Naive thymus-derived CD4-positive, alpha-beta T cell (primary cell): ENCODE measurements at regions of chr17 and their contacts with region 1.

Region 1: GRCh38 chr17:76353599-76354316 is at the start of gene PRPSAP1:
- DNase-seq: peak; percentile 76 to 89 (median 82)
- ATAC-seq: peak; percentile 98
- H3K4me3 ChIP-seq: peak within 1 kb of the TSS; percentile 97
- H3K4me3 Mint-ChIP-seq: peak within 1 kb of the TSS; percentile 89 to 99 (median 94)
- H3K27ac ChIP-seq: peak within 1 kb of the TSS; percentile 81
- H3K27ac Mint-ChIP-seq: peak within 1 kb of the TSS; percentile 91 to 100 (median 96)
- H3K4me1 ChIP-seq: no peaks in the 10 kb centered on the region
- H3K4me1 Mint-ChIP-seq: peaks cover 13 to 35% (median 19%) of the 10 kb centered on the region in 7 donors
- H3K27me3 ChIP-seq: no peaks in the 10 kb centered on the region
- H3K27me3 Mint-ChIP-seq: no peaks in the 10 kb centered on the region
- total RNA-seq, gene PRPSAP1: 19.6 to 55.9 (median 45.8) TPM

Region 2: DNA sequence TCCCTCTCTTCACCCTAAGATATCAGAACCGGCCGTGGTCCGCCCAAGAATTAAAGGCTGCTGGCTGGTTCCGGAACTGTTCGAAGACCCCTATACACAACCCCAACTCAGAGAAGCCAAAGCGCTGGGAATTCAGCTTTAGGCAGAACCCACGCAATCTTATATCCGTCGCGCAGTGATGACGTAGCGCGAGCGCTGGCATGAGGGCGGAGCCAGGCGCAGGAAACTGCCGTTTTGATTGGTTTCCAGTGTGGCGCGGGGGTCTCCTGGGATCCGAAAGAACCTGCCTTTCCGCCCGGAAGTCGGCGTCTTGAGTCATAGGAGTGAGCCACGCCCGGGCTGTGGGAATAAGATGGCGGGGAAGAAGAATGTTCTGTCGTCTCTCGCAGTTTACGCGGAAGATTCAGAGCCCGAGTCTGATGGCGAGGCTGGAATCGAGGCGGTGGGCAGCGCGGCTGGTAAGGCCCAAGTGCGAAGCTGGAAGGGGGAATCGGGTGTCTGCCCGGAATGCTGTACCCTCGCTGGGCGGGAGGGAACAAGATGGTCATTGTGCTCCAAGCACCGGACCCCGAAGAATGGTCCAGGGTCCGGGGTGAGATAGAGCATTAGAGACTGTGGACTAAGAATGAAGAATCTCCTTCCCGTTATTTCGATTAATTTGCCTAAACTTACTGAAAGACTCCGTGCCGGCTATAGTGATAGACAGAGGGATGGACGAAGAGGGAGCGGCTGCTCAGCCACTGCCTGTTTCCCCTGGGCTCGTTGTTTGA is 686.6 kb before region 1 on chr17 and contains the starts of genes RECQL5 and SAP30BP:
- CTCF ChIA-PET with region 1: no interaction called
- POLR2A ChIA-PET with region 1: no interaction called
- intact Hi-C with region 1: loop called in 1 of 2 experiments (anchors 5 kb)
- DNase-seq: peak; percentile 94 to 98 (median 96)
- ATAC-seq: peak; percentile 100
- H3K4me3 ChIP-seq: peak within 1 kb of the TSS; percentile 99
- H3K4me3 Mint-ChIP-seq: peak within 1 kb of the TSS in 6 of 10 donors; percentile 59 to 74 (median 64)
- H3K27ac ChIP-seq: peak within 1 kb of the TSS; percentile 96
- H3K27ac Mint-ChIP-seq: peak within 1 kb of the TSS in 5 of 9 donors; percentile 6 to 83 (median 60)
- H3K4me1 ChIP-seq: peaks cover 21 to 26% of the 10 kb centered on the region in 2 donors
- H3K4me1 Mint-ChIP-seq: peaks cover 11 to 34% (median 21%) of the 10 kb centered on the region in 7 donors
- H3K27me3 ChIP-seq: no peaks in the 10 kb centered on the region
- H3K27me3 Mint-ChIP-seq: no peaks in the 10 kb centered on the region
- total RNA-seq, gene RECQL5: 38.7 to 76.5 (median 49.2) TPM
- total RNA-seq, gene SAP30BP: 97.6 to 198 (median 116) TPM

Region 3: GRCh38 chr17:75940724-75941441 is 412.9 kb before region 1 on chr17 and contains the start of gene FBF1:
- CTCF ChIA-PET with region 1: no interaction called
- POLR2A ChIA-PET with region 1: no interaction called
- intact Hi-C with region 1: loop called in 1 of 2 experiments (anchors 5 kb)
- DNase-seq: peak; percentile 74 to 92 (median 82)
- ATAC-seq: peak; percentile 100
- H3K4me3 ChIP-seq: peak within 1 kb of the TSS; percentile 89
- H3K4me3 Mint-ChIP-seq: peak within 1 kb of the TSS; percentile 77 to 93 (median 90)
- H3K27ac ChIP-seq: peak within 1 kb of the TSS; percentile 86
- H3K27ac Mint-ChIP-seq: peak within 1 kb of the TSS; percentile 74 to 94 (median 89)
- H3K4me1 ChIP-seq: peaks cover 5 to 11% of the 10 kb centered on the region in 2 donors
- H3K4me1 Mint-ChIP-seq: peaks cover 9 to 19% (median 11%) of the 10 kb centered on the region in 7 donors
- H3K27me3 ChIP-seq: no peaks in the 10 kb centered on the region
- H3K27me3 Mint-ChIP-seq: no peaks in the 10 kb centered on the region
- total RNA-seq, gene FBF1: 19.9 to 48.1 (median 29.0) TPM

Region 4: DNA sequence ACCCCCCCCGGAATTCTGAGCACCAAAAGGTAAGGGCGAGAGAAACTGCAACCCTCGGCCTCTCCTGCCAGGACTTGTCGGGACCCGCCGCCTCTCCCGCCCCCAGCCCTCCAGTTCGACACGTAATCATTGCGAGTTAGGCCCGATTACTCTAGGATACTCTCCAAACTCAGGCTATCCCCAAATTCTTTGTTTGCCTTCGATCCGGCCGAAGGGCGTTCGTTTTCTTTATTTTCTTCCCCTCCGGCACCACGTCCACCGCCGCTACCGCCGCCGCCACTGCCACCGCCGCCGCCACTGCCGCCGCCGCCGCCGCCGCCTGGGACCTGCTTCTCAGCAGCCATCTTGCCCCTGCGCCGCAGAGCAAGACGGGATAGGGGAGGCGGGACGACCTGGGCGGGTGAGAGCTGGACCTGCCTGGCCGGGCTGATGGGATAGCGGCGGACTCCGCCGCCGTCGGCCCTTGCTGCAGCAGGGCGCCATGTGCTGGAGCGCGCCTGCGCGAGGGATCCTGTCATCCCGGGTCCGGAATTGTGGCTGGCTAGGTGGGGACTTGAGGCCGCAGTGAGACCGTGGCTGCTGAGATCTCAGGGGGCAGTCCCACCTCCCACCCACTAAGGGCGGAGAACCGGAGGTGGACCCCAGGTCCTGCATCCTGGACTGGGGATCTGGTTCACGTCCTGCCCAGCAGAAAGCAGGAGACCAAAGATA is 281.5 kb before region 1 on chr17 and contains the start of gene SRP68:
- CTCF ChIA-PET with region 1: no interaction called
- POLR2A ChIA-PET with region 1: no interaction called
- intact Hi-C with region 1: loop called in 1 of 2 experiments (anchors 1 kb)
- DNase-seq: peak; percentile 63 to 86 (median 74)
- ATAC-seq: peak; percentile 92
- H3K4me3 ChIP-seq: peak within 1 kb of the TSS; percentile 89
- H3K4me3 Mint-ChIP-seq: peak within 1 kb of the TSS; percentile 85 to 98 (median 97)
- H3K27ac ChIP-seq: peak within 1 kb of the TSS; percentile 93
- H3K27ac Mint-ChIP-seq: peak within 1 kb of the TSS; percentile 90 to 98 (median 95)
- H3K4me1 ChIP-seq: peaks cover 10 to 37% of the 10 kb centered on the region in 2 donors
- H3K4me1 Mint-ChIP-seq: peaks cover 21 to 62% (median 52%) of the 10 kb centered on the region in 7 donors
- H3K27me3 ChIP-seq: peaks cover 13 to 14% of the 10 kb centered on the region in 2 donors
- H3K27me3 Mint-ChIP-seq: peaks cover 17 to 37% (median 24%) of the 10 kb centered on the region in 5 donors
- total RNA-seq, gene SRP68: 70.8 to 105 (median 91.9) TPM

Region 5: GRCh38 chr17:76384222-76384986 is 30.6 kb after region 1 on chr17 and contains the start of gene SPHK1:
- CTCF ChIA-PET with region 1: no interaction called
- POLR2A ChIA-PET with region 1: interaction called, 8 read pairs
- intact Hi-C with region 1: loop called (anchors 1 kb)
- DNase-seq: peak in 7 of 9 donors; percentile 23 to 87 (median 42)
- ATAC-seq: peak; percentile 68
- H3K4me3 ChIP-seq: peak within 1 kb of the TSS; percentile 63
- H3K4me3 Mint-ChIP-seq: peak within 1 kb of the TSS; percentile 86 to 94 (median 92)
- H3K27ac ChIP-seq: no peak within 1 kb of the TSS
- H3K27ac Mint-ChIP-seq: peak within 1 kb of the TSS; percentile 18 to 88 (median 67)
- H3K4me1 ChIP-seq: peaks cover 0 to 15% of the 10 kb centered on the region in 2 donors
- H3K4me1 Mint-ChIP-seq: peaks cover 4 to 17% (median 11%) of the 10 kb centered on the region in 7 donors
- H3K27me3 ChIP-seq: no peaks in the 10 kb centered on the region
- H3K27me3 Mint-ChIP-seq: peaks cover 0 to 2% (median 0%) of the 10 kb centered on the region in 5 donors
- total RNA-seq, gene SPHK1: 0.43 to 14.1 (median 1.9) TPM

Region 6: GRCh38 chr17:76501018-76501826 is 147.5 kb after region 1 on chr17 and contains the start of gene RHBDF2:
- CTCF ChIA-PET with region 1: no interaction called
- POLR2A ChIA-PET with region 1: no interaction called
- intact Hi-C with region 1: loop called in 1 of 2 experiments (anchors 1 kb)
- DNase-seq: peak; percentile 90 to 100 (median 95)
- ATAC-seq: peak; percentile 99
- H3K4me3 ChIP-seq: peak within 1 kb of the TSS; percentile 62
- H3K4me3 Mint-ChIP-seq: peak within 1 kb of the TSS; percentile 82 to 91 (median 86)
- H3K27ac ChIP-seq: peak within 1 kb of the TSS; percentile 73
- H3K27ac Mint-ChIP-seq: peak within 1 kb of the TSS; percentile 95 to 99 (median 97)
- H3K4me1 ChIP-seq: peaks cover 22 to 44% of the 10 kb centered on the region in 2 donors
- H3K4me1 Mint-ChIP-seq: peaks cover 17 to 61% (median 35%) of the 10 kb centered on the region in 7 donors
- H3K27me3 ChIP-seq: no peaks in the 10 kb centered on the region
- H3K27me3 Mint-ChIP-seq: no peaks in the 10 kb centered on the region
- total RNA-seq, gene RHBDF2: 31.1 to 119 (median 35.4) TPM

Region 7: GRCh38 chr17:76671123-76671911 is 317.6 kb after region 1 on chr17:
- CTCF ChIA-PET with region 1: no interaction called
- POLR2A ChIA-PET with region 1: no interaction called
- intact Hi-C with region 1: loop called (anchors 1 to 5 kb)
- DNase-seq: peak; percentile 90 to 99 (median 98)
- ATAC-seq: peak; percentile 99
- H3K4me3 ChIP-seq: peak overlapping the region; percentile 76
- H3K4me3 Mint-ChIP-seq: peak overlapping the region; percentile 81 to 98 (median 92)
- H3K27ac ChIP-seq: peak overlapping the region; percentile 84
- H3K27ac Mint-ChIP-seq: peak overlapping the region; percentile 88 to 99 (median 96)
- H3K4me1 ChIP-seq: peaks cover 19 to 26% of the 10 kb centered on the region in 2 donors
- H3K4me1 Mint-ChIP-seq: peaks cover 20 to 43% (median 31%) of the 10 kb centered on the region in 7 donors
- H3K27me3 ChIP-seq: no peaks in the 10 kb centered on the region
- H3K27me3 Mint-ChIP-seq: peaks cover 0 to 10% (median 0%) of the 10 kb centered on the region in 5 donors

Region 8: GRCh38 chr17:76820039-76820438 is 466.3 kb after region 1 on chr17:
- CTCF ChIA-PET with region 1: no interaction called
- POLR2A ChIA-PET with region 1: no interaction called
- intact Hi-C with region 1: no loop called
- DNase-seq: no peak
- ATAC-seq: no peak
- H3K4me3 ChIP-seq: no peak overlapping the region
- H3K4me3 Mint-ChIP-seq: no peak overlapping the region
- H3K27ac ChIP-seq: no peak overlapping the region
- H3K27ac Mint-ChIP-seq: peak overlapping the region in 1 of 9 donors; percentile 6
- H3K4me1 ChIP-seq: peaks cover 0 to 7% of the 10 kb centered on the region in 2 donors
- H3K4me1 Mint-ChIP-seq: peaks cover 4 to 13% (median 8%) of the 10 kb centered on the region in 7 donors
- H3K27me3 ChIP-seq: no peaks in the 10 kb centered on the region
- H3K27me3 Mint-ChIP-seq: peaks cover 0 to 22% (median 0%) of the 10 kb centered on the region in 5 donors